Heart right ventricle (tissue), 16 donors: ENCODE measurements at regions of chr3 and their contacts with region 1.

Region 1: GRCh38 chr3:16600780-16601539 is 4.3 kb downstream of the DAZL start:
- DNase-seq: peak; percentile 74 to 82
- ATAC-seq: peak in 6 of 8 donors; percentile 49 to 83 (median 66)
- H3K4me3 ChIP-seq: peak overlapping the region in 1 of 10 donors; percentile 8
- H3K27ac ChIP-seq: no peak overlapping the region
- H3K4me1 ChIP-seq: peaks cover 0 to 6% (median 4%) of the 10 kb centered on the region in 9 donors
- H3K27me3 ChIP-seq: no peaks in the 10 kb centered on the region
- CTCF ChIP-seq: peak; percentile 62 to 94 (median 89)

Region 2: GRCh38 chr3:16456784-16457415 is 144.1 kb before region 1 on chr3:
- intact Hi-C with region 1: no loop called
- DNase-seq: no peak
- ATAC-seq: peak in 3 of 8 donors; percentile 29 to 58 (median 48)
- H3K4me3 ChIP-seq: no peak overlapping the region
- H3K27ac ChIP-seq: peak overlapping the region in 1 of 10 donors; percentile 11
- H3K4me1 ChIP-seq: peaks cover 0 to 44% (median 14%) of the 10 kb centered on the region in 9 donors
- H3K27me3 ChIP-seq: no peaks in the 10 kb centered on the region
- CTCF ChIP-seq: no peak

Region 3: GRCh38 chr3:16884084-16884747 is 283.3 kb after region 1 on chr3:
- intact Hi-C with region 1: loop called in 6 of 10 experiments (anchors 5 to 10 kb)
- DNase-seq: peak; percentile 74 to 84
- ATAC-seq: peak; percentile 66 to 89 (median 78)
- H3K4me3 ChIP-seq: peak overlapping the region; percentile 76 to 97 (median 86)
- H3K27ac ChIP-seq: peak overlapping the region; percentile 85 to 98 (median 96)
- H3K4me1 ChIP-seq: peaks cover 6 to 65% (median 38%) of the 10 kb centered on the region in 9 donors
- H3K27me3 ChIP-seq: no peaks in the 10 kb centered on the region
- CTCF ChIP-seq: peak; percentile 50 to 79 (median 72)

Region 4: DNA sequence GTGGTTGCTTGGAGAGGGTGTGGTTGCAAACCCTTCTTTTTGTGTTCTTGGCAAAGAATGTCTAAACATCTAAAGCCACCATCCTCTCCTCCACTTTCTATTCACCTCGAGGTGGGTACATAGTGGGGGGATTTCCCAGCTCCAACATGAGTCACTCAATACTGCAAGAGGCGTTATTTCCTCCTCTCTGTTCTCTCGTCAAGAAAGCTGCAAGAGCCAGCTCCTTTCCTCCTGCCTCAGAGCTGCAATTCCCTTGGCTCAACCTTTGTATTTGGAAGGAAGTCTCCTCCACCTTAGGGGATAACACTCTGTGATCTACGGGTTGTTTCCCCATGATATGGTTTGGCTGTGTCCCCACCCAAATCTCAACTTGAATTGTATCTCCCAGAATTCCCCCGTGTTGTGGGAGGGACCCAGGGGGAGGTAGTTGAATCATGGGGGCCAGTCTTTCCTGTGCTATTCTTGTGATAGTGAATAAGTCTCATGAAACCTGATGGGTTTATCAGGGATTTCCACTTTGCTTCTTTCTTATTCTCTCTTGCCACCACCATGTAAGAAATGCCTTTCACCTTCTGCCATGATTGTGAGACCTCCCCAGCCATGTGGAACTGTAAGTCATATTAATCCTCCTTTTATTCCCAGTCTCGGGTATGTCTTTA is 422.2 kb after region 1 on chr3:
- intact Hi-C with region 1: loop called in 2 of 10 experiments (anchors 10 kb)
- DNase-seq: no peak
- ATAC-seq: peak in 6 of 8 donors; percentile 32 to 82 (median 53)
- H3K4me3 ChIP-seq: no peak overlapping the region
- H3K27ac ChIP-seq: peak overlapping the region in 1 of 10 donors; percentile 29
- H3K4me1 ChIP-seq: peaks cover 0 to 18% (median 5%) of the 10 kb centered on the region in 9 donors
- H3K27me3 ChIP-seq: no peaks in the 10 kb centered on the region
- CTCF ChIP-seq: no peak

Region 5: DNA sequence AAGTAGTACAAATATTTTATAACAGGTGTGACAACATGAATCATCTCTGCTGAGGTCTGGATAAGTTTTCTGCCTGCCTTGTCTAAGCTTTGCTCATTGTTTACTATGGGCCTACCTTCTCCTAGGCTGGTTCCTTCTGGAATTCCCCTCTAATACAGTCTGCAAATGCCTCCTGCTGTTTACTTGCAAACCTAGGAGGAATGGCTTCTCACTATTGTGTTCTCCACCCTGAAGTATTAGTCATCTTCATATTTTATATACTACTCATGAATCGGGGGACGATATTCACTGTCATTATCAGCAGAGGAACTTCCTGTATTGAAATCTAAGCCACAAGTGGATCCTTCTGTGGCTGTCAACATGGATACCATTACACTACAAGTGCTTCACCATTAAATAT is 438.6 kb after region 1 on chr3:
- intact Hi-C with region 1: loop called in 6 of 10 experiments (anchors 5 kb)
- DNase-seq: no peak
- ATAC-seq: peak in 7 of 8 donors; percentile 31 to 81 (median 56)
- H3K4me3 ChIP-seq: no peak overlapping the region
- H3K27ac ChIP-seq: peak overlapping the region in 7 of 10 donors; percentile 29 to 72 (median 49)
- H3K4me1 ChIP-seq: peaks cover 0 to 48% (median 26%) of the 10 kb centered on the region in 9 donors
- H3K27me3 ChIP-seq: no peaks in the 10 kb centered on the region
- CTCF ChIP-seq: no peak

Region 6: DNA sequence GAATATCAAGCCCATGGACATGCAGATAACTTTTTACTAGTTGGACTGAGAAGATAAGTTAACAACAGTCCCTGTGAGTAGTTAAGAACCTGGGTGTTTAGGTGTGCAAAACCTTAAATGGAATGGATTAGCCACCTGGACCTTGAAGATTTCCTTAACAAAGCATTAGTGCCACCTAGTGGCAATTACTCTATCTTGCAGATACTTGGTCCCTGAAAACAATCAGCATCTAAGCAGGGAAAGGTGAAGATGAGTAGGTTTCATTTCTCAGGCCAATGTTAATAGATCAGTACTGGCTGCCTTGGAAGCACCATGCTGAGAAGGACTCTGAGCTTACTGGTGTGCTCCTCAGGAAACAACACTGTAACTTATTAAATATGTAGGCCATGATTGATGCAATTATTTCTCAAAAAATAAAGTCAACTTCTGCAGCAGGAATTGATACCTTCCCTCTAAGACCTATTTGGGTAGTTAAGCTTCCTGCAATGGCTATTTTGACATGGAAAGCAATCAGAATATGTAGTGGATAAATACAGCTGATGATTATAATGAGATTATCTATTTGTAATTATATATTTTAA is 812.1 kb after region 1 on chr3:
- intact Hi-C with region 1: loop called in 8 of 10 experiments (anchors 2 to 10 kb)
- DNase-seq: peak in 1 of 2 donors; percentile 8
- ATAC-seq: peak in 4 of 8 donors; percentile 46 to 61 (median 54)
- H3K4me3 ChIP-seq: no peak overlapping the region
- H3K27ac ChIP-seq: no peak overlapping the region
- H3K4me1 ChIP-seq: no peaks in the 10 kb centered on the region
- H3K27me3 ChIP-seq: no peaks in the 10 kb centered on the region
- CTCF ChIP-seq: peak; percentile 67 to 84 (median 83)